ENCODE measurements at regions of chr7 and their contacts with region 1.

Region 1: GRCh38 chr7:20470726-20471125 is 140.0 kb downstream of the ITGB8 start:
- DNase-seq: no peak
- ATAC-seq: peak; percentile 53

Region 2: GRCh38 chr7:19708397-19709248 is 762.1 kb before region 1 on chr7 and contains the start of gene POLR1F:
- intact Hi-C with region 1: loop called (anchors 10 kb)
- DNase-seq: peak; percentile 95
- ATAC-seq: peak; percentile 100
- total RNA-seq, gene POLR1F: 11.7 TPM